ENCODE measurements at regions of chr6 and their contacts with region 1.

Region 1: DNA sequence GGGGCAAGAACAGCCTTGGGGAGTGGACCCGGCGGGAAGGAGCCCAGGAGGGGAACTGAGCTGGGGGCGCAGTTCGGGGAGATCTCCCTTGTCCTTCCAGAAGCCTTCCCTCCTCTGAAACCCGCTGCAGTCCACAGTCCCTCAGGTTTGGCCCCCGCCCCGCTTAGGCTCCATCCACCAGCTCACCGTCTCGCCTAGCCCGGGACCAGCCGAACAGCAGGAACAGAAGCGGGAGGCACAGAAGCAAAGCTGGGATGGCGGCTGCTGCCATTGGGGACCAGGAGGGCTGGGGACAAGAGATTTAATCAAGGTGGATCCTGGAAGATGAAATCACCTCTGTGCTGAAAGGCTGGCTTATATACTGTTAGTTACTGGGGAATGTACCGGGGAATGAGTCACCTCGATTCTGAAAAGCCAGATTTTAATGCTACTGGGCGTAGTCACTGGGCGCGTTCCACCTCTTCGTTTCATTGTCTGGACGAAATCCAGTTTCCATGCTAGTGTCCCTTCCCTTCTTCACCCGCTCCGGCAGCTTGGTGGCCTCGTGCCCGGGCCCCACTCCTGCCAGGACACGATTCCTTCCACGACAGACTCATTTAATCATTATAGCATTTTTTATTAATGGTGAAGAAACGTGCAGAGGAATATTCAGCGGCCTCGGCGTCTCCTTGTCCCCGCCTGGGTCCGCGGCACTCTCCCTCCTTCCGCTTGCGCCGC is at the start of gene RAET1L:
- ATAC-seq: peak; percentile 9 to 92 (median 56)
- H3K4me3 ChIP-seq: no peak within 1 kb of the TSS
- H3K27ac ChIP-seq: no peak within 1 kb of the TSS
- H3K4me1 ChIP-seq: no peaks in the 10 kb centered on the region
- total RNA-seq, gene RAET1L: 1.9 to 55.3 (median 4.2) TPM in 4 of 8 experiments, not detected in the others

Region 2: DNA sequence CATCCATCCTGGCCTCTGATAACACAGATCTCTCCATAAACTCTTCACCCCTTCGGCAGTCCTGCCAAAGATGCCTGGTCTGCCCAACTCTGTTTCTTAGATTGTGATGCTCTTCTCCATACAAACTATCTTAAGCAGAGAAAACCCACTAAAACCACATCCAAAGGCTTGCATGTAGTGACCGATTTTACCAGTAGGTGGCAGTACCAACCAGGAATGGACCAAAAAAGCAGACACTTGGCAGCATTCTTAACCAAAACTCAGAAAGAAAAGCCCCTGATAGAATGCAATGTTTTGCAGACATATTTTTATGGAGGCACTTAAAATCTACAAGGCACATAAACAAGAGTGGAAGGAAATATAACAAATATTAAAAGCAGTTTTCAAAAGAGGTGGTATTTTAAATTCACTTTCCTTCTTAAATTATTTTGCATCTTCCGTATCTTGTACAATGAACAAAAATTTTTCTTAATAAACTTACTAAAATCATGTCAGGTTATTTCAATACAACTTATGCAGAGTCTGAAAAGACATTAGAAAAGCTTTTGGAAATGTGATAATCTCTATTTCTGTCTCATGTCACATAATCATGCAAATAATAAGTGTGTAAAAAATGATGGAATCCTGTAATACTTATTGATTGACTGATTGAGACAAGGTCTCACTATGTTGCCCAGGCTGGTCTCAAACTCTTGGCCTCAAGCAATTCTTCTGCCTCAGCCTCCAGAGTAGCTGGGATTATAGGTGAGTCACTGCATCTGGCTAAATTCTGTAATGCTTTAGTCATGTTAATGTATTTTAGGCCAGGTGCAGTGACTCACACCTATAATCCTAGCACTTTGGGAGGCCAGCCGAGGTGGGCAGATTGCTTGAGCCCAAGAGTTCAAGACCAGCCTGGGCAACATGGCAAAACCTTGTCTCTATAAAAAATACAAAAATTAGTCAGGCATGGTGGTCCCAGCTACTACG is 190.6 kb before region 1 on chr6:
- in situ Hi-C with region 1: loop called in 1 of 9 experiments (anchors 25 kb)
- ATAC-seq: peak in 1 of 8 experiments; percentile 27
- H3K4me3 ChIP-seq: no peak overlapping the region
- H3K27ac ChIP-seq: no peak overlapping the region
- H3K4me1 ChIP-seq: no peaks in the 10 kb centered on the region

Measured in motor neuron (in vitro differentiated cells).